Heart right ventricle (tissue), 16 donors: ENCODE measurements at regions of chr7 and their contacts with region 1.

Region 1: GRCh38 chr7:143988976-143989745 is 11.0 kb upstream of the OR6B1 start:
- DNase-seq: no peak
- ATAC-seq: no peak
- H3K4me3 ChIP-seq: no peak overlapping the region
- H3K27ac ChIP-seq: peak overlapping the region in 1 of 10 donors; percentile 24
- H3K4me1 ChIP-seq: peaks cover 0 to 25% (median 4%) of the 10 kb centered on the region in 9 donors
- H3K27me3 ChIP-seq: no peaks in the 10 kb centered on the region
- CTCF ChIP-seq: no peak

Region 2: GRCh38 chr7:143914938-143915652 is 74.1 kb before region 1 on chr7:
- intact Hi-C with region 1: loop called in 2 of 10 experiments (anchors 10 kb)
- DNase-seq: no peak
- ATAC-seq: no peak
- H3K4me3 ChIP-seq: no peak overlapping the region
- H3K27ac ChIP-seq: no peak overlapping the region
- H3K4me1 ChIP-seq: no peaks in the 10 kb centered on the region
- H3K27me3 ChIP-seq: no peaks in the 10 kb centered on the region
- CTCF ChIP-seq: peak in 1 of 9 donors; percentile 6

Region 3: GRCh38 chr7:143929224-143929920 is 59.8 kb before region 1 on chr7:
- intact Hi-C with region 1: loop called in 1 of 10 experiments (anchors 10 kb)
- DNase-seq: no peak
- ATAC-seq: peak in 1 of 8 donors; percentile 61
- H3K4me3 ChIP-seq: no peak overlapping the region
- H3K27ac ChIP-seq: no peak overlapping the region
- H3K4me1 ChIP-seq: no peaks in the 10 kb centered on the region
- H3K27me3 ChIP-seq: no peaks in the 10 kb centered on the region
- CTCF ChIP-seq: no peak

Region 4: GRCh38 chr7:143974474-143974873 is 14.7 kb before region 1 on chr7:
- intact Hi-C with region 1: no loop called
- DNase-seq: no peak
- ATAC-seq: no peak
- H3K4me3 ChIP-seq: no peak overlapping the region
- H3K27ac ChIP-seq: no peak overlapping the region
- H3K4me1 ChIP-seq: no peaks in the 10 kb centered on the region
- H3K27me3 ChIP-seq: no peaks in the 10 kb centered on the region
- CTCF ChIP-seq: no peak

Region 5: DNA sequence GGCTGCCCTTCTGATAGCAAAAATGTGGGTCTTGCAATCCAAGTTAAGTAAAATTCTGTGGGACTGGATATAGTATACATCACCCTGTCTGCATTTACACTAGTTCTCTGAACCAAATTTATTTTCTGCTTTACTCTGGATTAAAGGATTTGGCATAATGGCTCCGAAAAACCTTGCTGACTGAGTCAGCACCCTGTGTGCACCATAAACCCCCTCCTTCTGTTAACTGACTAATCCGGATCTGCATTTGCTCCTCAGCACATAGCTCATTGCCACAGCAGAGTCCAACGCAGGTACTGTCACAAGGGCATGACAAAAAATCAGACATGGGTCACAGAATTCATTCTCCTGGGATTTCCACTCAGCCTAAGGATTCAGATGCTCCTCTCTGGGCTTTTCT is 60.9 kb after region 1 on chr7:
- intact Hi-C with region 1: no loop called
- DNase-seq: no peak
- ATAC-seq: no peak
- H3K4me3 ChIP-seq: no peak overlapping the region
- H3K27ac ChIP-seq: no peak overlapping the region
- H3K4me1 ChIP-seq: no peaks in the 10 kb centered on the region
- H3K27me3 ChIP-seq: peaks cover 0 to 4% (median 0%) of the 10 kb centered on the region in 7 donors
- CTCF ChIP-seq: no peak